PC-3 (cell line): ENCODE measurements at regions of chr21 and their contacts with region 1.

Region 1: GRCh38 chr21:33901412-33902288 is 14.0 kb downstream of the ATP5PO start:
- DNase-seq: peak; percentile 55
- ATAC-seq: peak; percentile 71
- H3K4me3 ChIP-seq: no peak overlapping the region
- H3K27ac ChIP-seq: no peak overlapping the region
- H3K4me1 ChIP-seq: peaks cover 5% of the 10 kb centered on the region; the same call in 1 of the 2 replicates
- H3K27me3 ChIP-seq: no peaks in the 10 kb centered on the region
- CTCF ChIP-seq: peak; percentile 76

Region 2: DNA sequence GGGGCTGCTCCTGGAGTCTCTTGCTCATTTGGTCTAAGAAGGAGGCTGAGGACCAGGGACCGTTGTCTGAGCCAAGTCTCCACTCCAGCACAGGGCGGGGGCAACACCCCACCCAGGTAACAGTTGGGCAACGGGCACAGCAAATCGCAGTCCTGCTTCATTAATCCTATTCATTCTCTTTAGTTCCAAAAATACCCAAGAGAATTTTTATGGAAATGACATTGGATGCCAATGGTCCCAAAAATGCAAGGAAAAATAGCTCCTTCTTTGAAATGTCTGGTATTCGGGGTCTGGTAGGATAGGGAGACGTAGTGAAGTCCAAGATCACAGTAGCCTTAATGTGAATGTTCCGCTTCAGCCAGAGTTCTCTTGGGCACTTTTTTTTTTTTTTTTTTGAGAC is 60.1 kb before region 1 on chr21:
- CTCF ChIA-PET with region 1: no interaction called
- POLR2A ChIA-PET with region 1: interaction called, 13 read pairs
- intact Hi-C with region 1: no loop called
- DNase-seq: no peak
- ATAC-seq: no peak
- H3K4me3 ChIP-seq: no peak overlapping the region
- H3K27ac ChIP-seq: no peak overlapping the region
- H3K4me1 ChIP-seq: no peaks in the 10 kb centered on the region
- H3K27me3 ChIP-seq: no peaks in the 10 kb centered on the region
- CTCF ChIP-seq: no peak

Region 3: DNA sequence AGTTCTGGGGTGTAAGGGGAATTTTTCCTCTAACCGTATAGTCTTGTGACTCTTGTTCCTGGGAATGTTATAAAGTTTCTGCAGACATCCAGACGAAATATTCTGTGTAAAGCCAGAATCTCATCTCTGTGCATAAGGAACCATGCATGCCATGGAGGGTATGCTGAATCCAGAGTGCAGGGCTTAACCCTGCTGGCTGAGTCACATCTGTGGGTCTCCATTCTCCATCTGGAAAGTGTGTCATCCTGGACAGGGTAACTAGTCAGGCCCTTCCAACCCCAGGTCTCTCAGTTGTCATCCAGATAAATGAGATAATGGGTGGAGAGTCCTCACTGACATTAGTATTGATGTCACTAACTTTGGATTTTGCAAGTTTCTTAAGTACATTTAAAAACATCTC is 34.8 kb before region 1 on chr21:
- CTCF ChIA-PET with region 1: interaction called, 3 read pairs
- POLR2A ChIA-PET with region 1: interaction called, 20 read pairs
- intact Hi-C with region 1: no loop called
- DNase-seq: no peak
- ATAC-seq: no peak
- H3K4me3 ChIP-seq: no peak overlapping the region
- H3K27ac ChIP-seq: no peak overlapping the region
- H3K4me1 ChIP-seq: no peaks in the 10 kb centered on the region
- H3K27me3 ChIP-seq: no peaks in the 10 kb centered on the region
- CTCF ChIP-seq: no peak

Region 4: DNA sequence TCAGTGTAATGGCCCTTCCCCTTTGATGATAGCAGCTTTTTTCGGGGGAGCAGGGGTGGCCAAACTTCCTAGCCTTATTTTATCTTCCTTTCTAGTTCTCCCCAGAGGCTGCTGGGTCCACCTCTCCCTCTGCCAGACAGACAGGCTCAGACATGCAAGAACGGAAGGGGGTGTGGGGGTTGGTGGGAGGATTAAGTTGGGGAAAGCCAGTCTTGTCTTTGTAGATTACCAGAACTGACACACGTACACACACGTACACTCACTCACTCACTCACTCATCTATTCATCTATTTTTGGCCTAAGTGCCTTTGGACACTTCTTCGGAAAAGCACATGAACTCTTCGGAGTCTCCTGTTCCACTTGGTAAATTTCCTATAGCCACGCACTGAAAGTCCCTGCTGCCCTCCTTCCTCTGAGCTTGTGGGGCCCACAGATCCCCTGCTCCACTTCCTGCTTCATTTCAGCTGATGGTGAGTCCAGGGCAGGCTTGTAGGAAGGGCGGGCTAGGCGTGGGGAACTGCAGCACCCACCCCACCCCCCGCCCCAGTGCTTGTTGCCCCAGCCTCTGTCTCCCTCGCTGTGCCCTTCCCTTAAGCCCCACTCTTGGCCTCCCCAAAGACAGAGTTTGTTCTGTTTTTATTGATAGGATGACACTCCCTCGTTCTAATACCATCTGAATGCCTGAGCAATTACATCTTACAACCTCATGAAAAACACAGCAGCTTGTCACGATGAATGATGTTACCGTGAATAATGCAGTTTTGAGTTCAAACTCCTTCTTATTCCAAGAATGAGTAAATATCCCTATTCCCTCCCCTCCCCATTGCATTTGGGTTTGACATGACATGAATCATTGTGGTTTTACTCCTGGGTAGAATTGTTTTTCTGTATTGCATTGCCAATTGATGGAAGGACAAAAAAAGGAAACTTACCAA is 74.7 kb after region 1 on chr21:
- CTCF ChIA-PET with region 1: no interaction called
- POLR2A ChIA-PET with region 1: no interaction called
- intact Hi-C with region 1: no loop called
- DNase-seq: peak; percentile 98
- ATAC-seq: peak; percentile 76
- H3K4me3 ChIP-seq: peak overlapping the region; percentile 44
- H3K27ac ChIP-seq: peak overlapping the region; percentile 98
- H3K4me1 ChIP-seq: peaks cover 48% of the 10 kb centered on the region
- H3K27me3 ChIP-seq: no peaks in the 10 kb centered on the region
- CTCF ChIP-seq: no peak